Activated T-helper 2 cell treated with anti-CD3 and anti-CD28 coated beads, Interferon-gamma antibody, Interleukin-2, Interleukin-4, amounts not matched to agents 10 μg/mL and 5 μg/mL and 100 μg/mL, durations not matched to agents 14 hours and 24 hours and 36 hours (primary cell): ENCODE measurements at regions of chr11 and their contacts with region 1.

Region 1: GRCh38 chr11:128472128-128473089 is 114.9 kb downstream of the ETS1 start:
- DNase-seq: peak; percentile 62
- H3K4me3 Mint-ChIP-seq: peak overlapping the region; percentile 75
- H3K27ac Mint-ChIP-seq: peak overlapping the region; percentile 95
- H3K4me1 Mint-ChIP-seq: peaks cover 94% of the 10 kb centered on the region
- H3K27me3 Mint-ChIP-seq: no peaks in the 10 kb centered on the region

Region 2: DNA sequence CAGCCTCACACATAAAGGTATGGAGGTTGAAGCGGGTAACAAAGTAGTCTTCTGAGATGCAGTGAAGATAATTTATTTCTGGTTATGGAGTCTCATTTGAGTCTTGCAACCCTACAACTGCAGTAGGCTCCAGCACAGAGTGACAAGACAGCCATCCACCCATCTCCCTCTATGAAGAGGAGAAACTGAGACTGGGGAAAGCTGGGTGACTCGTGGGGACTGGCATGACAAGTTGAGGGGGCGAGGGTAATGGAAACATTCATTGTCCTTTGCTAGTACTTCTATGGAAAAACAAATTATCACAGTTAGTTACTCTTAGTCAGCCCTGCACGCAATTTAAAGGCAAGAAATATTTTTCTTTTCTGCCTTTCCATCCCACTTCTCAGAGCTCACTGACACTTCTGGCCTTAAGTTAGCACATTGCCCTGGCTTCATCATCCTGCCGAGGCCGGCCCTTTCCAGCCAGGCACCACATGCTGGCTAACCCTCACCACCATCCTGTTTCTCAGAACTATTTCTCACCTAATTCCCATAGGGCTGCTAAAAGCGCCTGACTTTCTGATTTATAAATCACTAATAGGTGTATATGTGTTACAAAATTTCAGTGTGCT is 246.2 kb before region 1 on chr11:
- intact Hi-C with region 1: loop called (anchors 1 kb)
- DNase-seq: no peak
- H3K4me3 Mint-ChIP-seq: peak overlapping the region; percentile 53
- H3K27ac Mint-ChIP-seq: peak overlapping the region; percentile 97
- H3K4me1 Mint-ChIP-seq: peaks cover 49% of the 10 kb centered on the region
- H3K27me3 Mint-ChIP-seq: no peaks in the 10 kb centered on the region

Region 3: DNA sequence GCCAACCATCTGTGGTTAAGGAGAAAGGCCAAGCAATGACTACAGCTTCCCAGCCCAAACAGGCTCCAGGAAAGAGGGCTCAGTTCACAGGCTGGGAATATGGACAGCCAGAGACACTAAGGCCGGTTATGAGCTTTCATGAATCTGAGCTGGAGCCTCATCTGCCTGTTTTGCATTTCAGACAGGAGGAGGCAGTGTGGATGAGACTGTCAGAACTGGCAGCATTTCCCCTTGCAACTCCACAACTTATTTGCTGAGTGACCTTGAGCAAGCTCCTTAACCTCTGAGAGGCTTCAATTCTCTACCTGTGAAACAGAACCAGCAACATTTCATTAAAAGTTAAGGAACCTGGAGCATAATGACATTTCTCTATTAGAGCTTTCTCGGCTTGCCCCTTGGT is 149.0 kb before region 1 on chr11:
- intact Hi-C with region 1: loop called (anchors 1 kb)
- DNase-seq: peak; percentile 44
- H3K4me3 Mint-ChIP-seq: peak overlapping the region; percentile 62
- H3K27ac Mint-ChIP-seq: peak overlapping the region; percentile 94
- H3K4me1 Mint-ChIP-seq: peaks cover 81% of the 10 kb centered on the region
- H3K27me3 Mint-ChIP-seq: no peaks in the 10 kb centered on the region

Region 4: GRCh38 chr11:128497061-128497775 is 24.8 kb after region 1 on chr11:
- intact Hi-C with region 1: loop called (anchors 2 kb)
- DNase-seq: no peak
- H3K4me3 Mint-ChIP-seq: peak overlapping the region; percentile 57
- H3K27ac Mint-ChIP-seq: peak overlapping the region; percentile 94
- H3K4me1 Mint-ChIP-seq: peaks cover 94% of the 10 kb centered on the region
- H3K27me3 Mint-ChIP-seq: no peaks in the 10 kb centered on the region

Region 5: GRCh38 chr11:128582496-128583366 is 110.3 kb after region 1 on chr11:
- intact Hi-C with region 1: loop called (anchors 5 kb)
- DNase-seq: no peak
- H3K4me3 Mint-ChIP-seq: no peak overlapping the region
- H3K27ac Mint-ChIP-seq: no peak overlapping the region
- H3K4me1 Mint-ChIP-seq: peaks cover 26% of the 10 kb centered on the region
- H3K27me3 Mint-ChIP-seq: peaks cover 15% of the 10 kb centered on the region